ENCODE measurements at regions of chr1 and their contacts with region 1.

Region 1: GRCh38 chr1:6859415-6860343 is 74.4 kb downstream of the CAMTA1 start:
- DNase-seq: no peak
- H3K4me3 ChIP-seq: peak overlapping the region in 1 of 2 donors; percentile 18
- H3K27ac ChIP-seq: peak overlapping the region; percentile 80 to 84
- H3K4me1 ChIP-seq: peaks cover 4 to 21% of the 10 kb centered on the region in 2 donors
- H3K27me3 ChIP-seq: no peaks in the 10 kb centered on the region
- CTCF ChIP-seq: no peak

Region 2: DNA sequence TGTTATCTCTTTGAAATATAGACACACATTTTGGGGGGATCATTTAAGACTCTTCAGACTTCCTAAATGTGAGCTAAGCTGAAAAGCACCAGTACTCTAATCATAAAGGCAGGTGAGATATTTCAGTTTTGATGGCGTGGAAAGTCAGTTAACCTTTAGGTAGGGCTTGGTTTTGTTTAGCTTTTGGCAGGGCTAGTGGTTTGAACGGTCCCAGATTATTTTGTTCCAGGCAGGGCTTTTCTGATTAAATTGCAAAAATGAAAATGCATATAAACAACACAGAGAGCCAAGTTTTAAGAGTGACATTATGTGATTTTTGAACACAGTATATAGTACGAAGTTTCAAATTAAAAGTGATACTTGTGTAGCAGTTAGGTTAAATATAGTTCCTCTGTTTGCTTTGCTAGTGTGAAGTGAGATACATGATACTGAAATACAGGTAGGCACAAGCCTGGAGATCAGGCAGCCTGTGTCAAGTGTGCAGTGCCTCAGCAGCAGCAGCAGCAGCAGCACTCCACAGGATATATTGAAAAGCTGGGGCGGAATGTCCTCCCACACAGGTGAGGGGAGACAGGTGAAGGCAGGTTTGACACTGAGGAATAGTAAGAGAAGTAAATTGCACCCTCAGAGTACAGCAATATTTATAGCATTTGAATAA is 27.0 kb before region 1 on chr1:
- intact Hi-C with region 1: loop called (anchors 5 kb)
- DNase-seq: no peak
- H3K4me3 ChIP-seq: no peak overlapping the region
- H3K27ac ChIP-seq: peak overlapping the region in 1 of 2 donors; percentile 11
- H3K4me1 ChIP-seq: peaks cover 8 to 20% of the 10 kb centered on the region in 2 donors
- H3K27me3 ChIP-seq: no peaks in the 10 kb centered on the region
- CTCF ChIP-seq: no peak

Region 3: GRCh38 chr1:6922096-6922931 is 62.6 kb after region 1 on chr1:
- intact Hi-C with region 1: loop called (anchors 5 kb)
- DNase-seq: peak; percentile 48 to 91
- H3K4me3 ChIP-seq: no peak overlapping the region
- H3K27ac ChIP-seq: peak overlapping the region; percentile 39 to 87
- H3K4me1 ChIP-seq: peaks cover 13 to 32% of the 10 kb centered on the region in 2 donors
- H3K27me3 ChIP-seq: no peaks in the 10 kb centered on the region
- CTCF ChIP-seq: no peak